HEK293 (cell line): ENCODE measurements at regions of chr2 and their contacts with region 1.

Region 1: DNA sequence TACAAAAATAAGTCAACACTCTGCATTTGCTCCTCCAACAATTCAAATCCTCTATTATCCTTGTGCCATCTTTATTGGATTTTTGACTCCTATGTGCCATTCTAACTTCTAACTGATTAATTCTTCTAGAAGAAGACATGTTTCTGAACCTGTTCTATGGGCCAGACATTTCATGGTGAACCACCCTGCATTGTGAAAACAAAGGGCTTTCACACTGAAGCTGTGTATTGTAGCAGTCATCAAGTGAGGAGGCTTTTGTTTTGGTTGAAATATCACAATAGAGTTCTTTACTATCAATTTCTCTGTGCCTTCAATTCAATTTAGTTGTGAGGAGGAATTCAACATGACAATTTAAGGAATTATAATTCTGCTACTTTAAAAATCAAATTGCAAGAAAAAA is 357.9 kb downstream of the PLCL1 start:
- H3K4me3 ChIP-seq: no peak overlapping the region
- H3K27ac ChIP-seq: no peak overlapping the region
- H3K4me1 ChIP-seq: no peaks in the 10 kb centered on the region
- CTCF ChIP-seq: no peak

Region 2: GRCh38 chr2:197813093-197813787 is 349.0 kb before region 1 on chr2:
- CTCF ChIA-PET with region 1: interaction called, 10 read pairs
- POLR2A ChIA-PET with region 1: no interaction called
- H3K4me3 ChIP-seq: no peak overlapping the region
- H3K27ac ChIP-seq: no peak overlapping the region
- H3K4me1 ChIP-seq: no peaks in the 10 kb centered on the region
- CTCF ChIP-seq: no peak